Activated naive CD4-positive, alpha-beta T cell treated with anti-CD3 and anti-CD28 coated beads for 36 hours (primary cell): ENCODE measurements at regions of chr5 and their contacts with region 1.

Region 1: GRCh38 chr5:43389679-43390329 is 22.4 kb downstream of the CCL28 start:
- DNase-seq: peak; percentile 72
- H3K4me3 Mint-ChIP-seq: no peak overlapping the region
- H3K27ac Mint-ChIP-seq: no peak overlapping the region
- H3K4me1 Mint-ChIP-seq: peaks cover 32% of the 10 kb centered on the region
- H3K27me3 Mint-ChIP-seq: no peaks in the 10 kb centered on the region

Region 2: GRCh38 chr5:42908509-42909488 is 481.0 kb before region 1 on chr5:
- CTCF ChIA-PET with region 1: interaction called, 4 read pairs
- intact Hi-C with region 1: loop called (anchors 1 kb)
- DNase-seq: peak; percentile 94
- H3K4me3 Mint-ChIP-seq: peak overlapping the region; percentile 92
- H3K27ac Mint-ChIP-seq: peak overlapping the region; percentile 75
- H3K4me1 Mint-ChIP-seq: peaks cover 10% of the 10 kb centered on the region
- H3K27me3 Mint-ChIP-seq: peaks cover 10% of the 10 kb centered on the region

Region 3: GRCh38 chr5:43105369-43106289 is 284.2 kb before region 1 on chr5:
- CTCF ChIA-PET with region 1: interaction called, 25 read pairs
- intact Hi-C with region 1: loop called (anchors 1 kb)
- DNase-seq: peak; percentile 92
- H3K4me3 Mint-ChIP-seq: peak overlapping the region; percentile 81
- H3K27ac Mint-ChIP-seq: peak overlapping the region; percentile 87
- H3K4me1 Mint-ChIP-seq: peaks cover 42% of the 10 kb centered on the region
- H3K27me3 Mint-ChIP-seq: no peaks in the 10 kb centered on the region

Region 4: GRCh38 chr5:43227655-43228054 is 162.1 kb before region 1 on chr5:
- CTCF ChIA-PET with region 1: interaction called, 24 read pairs
- intact Hi-C with region 1: loop called (anchors 1 kb)
- DNase-seq: no peak
- H3K4me3 Mint-ChIP-seq: no peak overlapping the region
- H3K27ac Mint-ChIP-seq: no peak overlapping the region
- H3K4me1 Mint-ChIP-seq: no peaks in the 10 kb centered on the region
- H3K27me3 Mint-ChIP-seq: no peaks in the 10 kb centered on the region

Region 5: DNA sequence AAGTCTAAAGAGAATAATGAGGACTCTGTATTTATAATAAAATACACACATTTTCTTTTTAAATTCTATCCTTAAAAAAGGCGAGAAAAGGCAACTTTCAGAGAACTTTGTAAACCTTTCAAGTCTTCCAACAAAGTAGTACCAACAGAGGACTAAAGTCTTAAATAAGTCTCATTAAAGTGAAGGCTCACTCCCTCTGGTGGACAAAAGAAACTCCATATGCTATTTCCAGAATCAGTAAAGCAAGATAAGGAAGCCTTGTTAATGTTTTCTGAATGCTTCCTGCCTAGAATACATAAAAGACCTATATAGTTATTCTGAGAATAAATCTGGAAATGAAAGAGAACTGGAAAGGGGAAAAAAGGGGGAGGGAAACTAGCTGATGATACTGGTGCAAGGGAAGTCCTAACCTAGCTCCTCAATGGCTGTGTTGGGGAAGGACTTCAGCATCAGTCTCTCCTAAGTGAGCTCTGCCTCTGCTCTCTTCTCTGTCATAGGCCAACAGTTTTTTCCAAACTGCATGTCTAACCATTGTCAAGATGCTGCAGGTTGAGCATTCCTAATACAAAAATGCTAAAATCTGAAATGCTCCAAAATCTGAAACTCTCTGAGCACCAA is 83.7 kb before region 1 on chr5:
- CTCF ChIA-PET with region 1: interaction called, 21 read pairs
- intact Hi-C with region 1: loop called (anchors 1 kb)
- DNase-seq: no peak
- H3K4me3 Mint-ChIP-seq: no peak overlapping the region
- H3K27ac Mint-ChIP-seq: peak overlapping the region; percentile 75
- H3K4me1 Mint-ChIP-seq: peaks cover 80% of the 10 kb centered on the region
- H3K27me3 Mint-ChIP-seq: no peaks in the 10 kb centered on the region

Region 6: DNA sequence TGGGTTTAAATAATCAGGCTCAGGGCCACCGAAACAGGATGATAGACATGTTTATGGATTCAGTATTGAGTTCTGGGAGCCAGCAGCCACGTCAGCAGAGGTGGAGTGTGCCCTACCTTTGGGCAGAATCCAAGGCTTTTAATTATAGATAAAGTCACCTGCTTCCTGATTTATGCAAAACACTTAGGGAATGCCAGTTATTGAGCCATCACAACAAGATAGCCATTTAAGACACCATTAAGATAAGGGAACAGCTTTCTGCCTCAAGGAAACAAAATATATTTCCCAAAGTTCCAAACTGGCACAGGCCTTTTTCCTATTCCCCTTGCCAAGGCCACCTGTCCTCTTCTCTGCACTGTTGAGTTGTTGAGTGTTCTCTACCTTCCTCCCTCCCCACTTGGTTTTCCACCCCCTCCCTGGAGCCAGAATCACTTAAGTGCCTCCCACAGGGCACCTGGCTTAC is 20.0 kb after region 1 on chr5:
- CTCF ChIA-PET with region 1: no interaction called
- intact Hi-C with region 1: no loop called
- DNase-seq: no peak
- H3K4me3 Mint-ChIP-seq: no peak overlapping the region
- H3K27ac Mint-ChIP-seq: no peak overlapping the region
- H3K4me1 Mint-ChIP-seq: no peaks in the 10 kb centered on the region
- H3K27me3 Mint-ChIP-seq: no peaks in the 10 kb centered on the region

Region 7: DNA sequence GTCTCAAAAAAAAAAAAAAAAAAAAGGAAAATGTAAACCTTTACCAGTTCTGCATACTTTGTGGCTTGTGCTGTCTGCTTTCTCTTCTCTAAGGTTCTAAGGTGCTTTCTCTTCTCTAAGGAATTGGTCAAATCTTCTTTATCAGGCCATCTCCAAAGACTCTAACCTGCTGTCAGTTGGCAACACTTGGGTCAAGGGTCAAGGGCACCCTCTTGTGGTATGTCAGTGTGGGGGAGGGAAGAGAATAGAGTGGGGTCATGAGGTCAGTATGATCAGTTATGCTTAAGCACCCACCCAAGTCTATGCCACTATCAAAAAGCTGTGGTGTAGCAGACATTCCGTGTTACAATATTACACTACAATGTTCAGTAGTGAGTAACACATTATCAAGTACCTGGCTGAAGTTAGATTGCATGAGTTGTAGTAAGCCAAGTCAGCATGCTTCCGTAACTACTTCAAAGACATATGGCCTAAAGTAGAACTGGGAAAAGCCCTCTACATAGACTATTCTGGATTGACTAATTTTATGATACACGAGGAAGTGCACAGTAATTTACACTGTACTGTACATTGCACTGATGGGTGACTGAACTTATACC is 47.4 kb after region 1 on chr5:
- CTCF ChIA-PET with region 1: no interaction called
- intact Hi-C with region 1: no loop called
- DNase-seq: no peak
- H3K4me3 Mint-ChIP-seq: no peak overlapping the region
- H3K27ac Mint-ChIP-seq: no peak overlapping the region
- H3K4me1 Mint-ChIP-seq: no peaks in the 10 kb centered on the region
- H3K27me3 Mint-ChIP-seq: no peaks in the 10 kb centered on the region

Region 8: GRCh38 chr5:43785198-43785597 is 395.4 kb after region 1 on chr5:
- CTCF ChIA-PET with region 1: no interaction called
- intact Hi-C with region 1: no loop called
- DNase-seq: no peak
- H3K4me3 Mint-ChIP-seq: no peak overlapping the region
- H3K27ac Mint-ChIP-seq: no peak overlapping the region
- H3K4me1 Mint-ChIP-seq: no peaks in the 10 kb centered on the region
- H3K27me3 Mint-ChIP-seq: peaks cover 5% of the 10 kb centered on the region